ENCODE measurements at regions of chr3 and their contacts with region 1.

Region 1: GRCh38 chr3:176785171-176785570 is 412.1 kb downstream of the TBL1XR1 start:
- DNase-seq: no peak
- H3K4me3 ChIP-seq: no peak overlapping the region
- H3K4me3 Mint-ChIP-seq: no peak overlapping the region
- H3K27ac Mint-ChIP-seq: no peak overlapping the region
- H3K4me1 ChIP-seq: no peaks in the 10 kb centered on the region
- H3K4me1 Mint-ChIP-seq: no peaks in the 10 kb centered on the region
- H3K27me3 ChIP-seq: no peaks in the 10 kb centered on the region
- H3K27me3 Mint-ChIP-seq: no peaks in the 10 kb centered on the region
- CTCF ChIP-seq: no peak

Region 2: GRCh38 chr3:176814285-176814684 is 29.1 kb after region 1 on chr3:
- CTCF ChIA-PET with region 1: interaction called, 10 read pairs
- POLR2A ChIA-PET with region 1: no interaction called
- intact Hi-C with region 1: no loop called
- DNase-seq: peak; percentile 36 to 54
- H3K4me3 ChIP-seq: no peak overlapping the region
- H3K4me3 Mint-ChIP-seq: no peak overlapping the region
- H3K27ac Mint-ChIP-seq: no peak overlapping the region
- H3K4me1 ChIP-seq: no peaks in the 10 kb centered on the region
- H3K4me1 Mint-ChIP-seq: no peaks in the 10 kb centered on the region
- H3K27me3 ChIP-seq: no peaks in the 10 kb centered on the region
- H3K27me3 Mint-ChIP-seq: no peaks in the 10 kb centered on the region
- CTCF ChIP-seq: peak in 1 of 2 experiments; percentile 33